Heart right ventricle (tissue), 16 donors: ENCODE measurements at regions of chrX and their contacts with region 1.

Region 1: GRCh38 chrX:150416469-150416868 is 53.4 kb downstream of the MAMLD1 start:
- DNase-seq: no peak
- ATAC-seq: no peak
- H3K4me3 ChIP-seq: no peak overlapping the region
- H3K27ac ChIP-seq: no peak overlapping the region
- H3K4me1 ChIP-seq: no peaks in the 10 kb centered on the region
- H3K27me3 ChIP-seq: no peaks in the 10 kb centered on the region
- CTCF ChIP-seq: no peak

Region 2: DNA sequence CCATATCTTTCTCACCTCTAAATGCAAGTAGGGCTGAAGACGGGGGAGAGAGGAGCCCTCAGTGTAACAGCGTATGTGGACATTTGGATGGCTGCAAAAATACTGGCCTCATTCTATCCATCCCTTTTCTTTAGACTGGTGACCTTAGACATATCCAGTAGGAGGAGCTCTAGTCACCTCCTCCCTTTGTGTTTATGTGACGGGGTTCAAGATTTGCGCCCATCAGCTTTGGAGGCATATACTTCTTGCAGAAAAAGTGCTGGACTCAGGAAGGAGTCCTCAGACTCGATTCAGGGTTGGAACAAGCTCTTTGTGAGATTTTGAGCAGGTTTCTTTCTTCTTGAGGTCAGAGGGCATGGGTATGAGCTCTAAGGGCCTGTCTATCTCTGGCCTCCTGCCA is 32.8 kb after region 1 on chrX:
- intact Hi-C with region 1: loop called in 1 of 10 experiments (anchors 2 kb)
- DNase-seq: no peak
- ATAC-seq: no peak
- H3K4me3 ChIP-seq: no peak overlapping the region
- H3K27ac ChIP-seq: no peak overlapping the region
- H3K4me1 ChIP-seq: peaks cover 0 to 38% (median 6%) of the 10 kb centered on the region in 9 donors
- H3K27me3 ChIP-seq: no peaks in the 10 kb centered on the region
- CTCF ChIP-seq: no peak